ENCODE measurements at regions of chr11 and their contacts with region 1.

Region 1: GRCh38 chr11:69048718-69049489 is at the start of gene TPCN2:
- DNase-seq: peak; percentile 86 to 91
- H3K4me3 ChIP-seq: peak within 1 kb of the TSS; percentile 82
- H3K27ac ChIP-seq: no peak within 1 kb of the TSS
- H3K4me1 ChIP-seq: peaks cover 12% of the 10 kb centered on the region
- H3K27me3 ChIP-seq: no peaks in the 10 kb centered on the region
- CTCF ChIP-seq: no peak
- total RNA-seq, gene TPCN2: 24.8 and 26.4 TPM in 2 replicates

Region 2: GRCh38 chr11:68447015-68447801 is 601.7 kb before region 1 on chr11:
- CTCF ChIA-PET with region 1: interaction called, 10 read pairs
- POLR2A ChIA-PET with region 1: no interaction called
- intact Hi-C with region 1: no loop called
- DNase-seq: peak; percentile 54 to 77
- H3K4me3 ChIP-seq: no peak overlapping the region
- H3K27ac ChIP-seq: no peak overlapping the region
- H3K4me1 ChIP-seq: no peaks in the 10 kb centered on the region
- H3K27me3 ChIP-seq: no peaks in the 10 kb centered on the region
- CTCF ChIP-seq: peak; percentile 93

Region 3: GRCh38 chr11:68584097-68584496 is 464.8 kb before region 1 on chr11:
- CTCF ChIA-PET with region 1: no interaction called
- POLR2A ChIA-PET with region 1: no interaction called
- intact Hi-C with region 1: no loop called
- DNase-seq: peak in 1 of 2 experiments; percentile 22
- H3K4me3 ChIP-seq: no peak overlapping the region
- H3K27ac ChIP-seq: no peak overlapping the region
- H3K4me1 ChIP-seq: no peaks in the 10 kb centered on the region
- H3K27me3 ChIP-seq: no peaks in the 10 kb centered on the region
- CTCF ChIP-seq: peak; percentile 78

Region 4: GRCh38 chr11:68610452-68611116 is 438.3 kb before region 1 on chr11:
- CTCF ChIA-PET with region 1: interaction called, 3 read pairs
- POLR2A ChIA-PET with region 1: interaction called, 31 read pairs
- intact Hi-C with region 1: no loop called
- DNase-seq: no peak
- H3K4me3 ChIP-seq: no peak overlapping the region
- H3K27ac ChIP-seq: no peak overlapping the region
- H3K4me1 ChIP-seq: no peaks in the 10 kb centered on the region
- H3K27me3 ChIP-seq: no peaks in the 10 kb centered on the region
- CTCF ChIP-seq: peak; percentile 45; the same call in 1 of the 2 replicates

Region 5: GRCh38 chr11:68903288-68904247 is 145.3 kb before region 1 on chr11 and contains the starts of genes IGHMBP2 and MRPL21:
- CTCF ChIA-PET with region 1: interaction called, 3 read pairs
- POLR2A ChIA-PET with region 1: no interaction called
- intact Hi-C with region 1: loop called (anchors 1 kb)
- DNase-seq: peak; percentile 70 to 86
- H3K4me3 ChIP-seq: peak within 1 kb of the TSS; percentile 99
- H3K27ac ChIP-seq: peak within 1 kb of the TSS; percentile 36
- H3K4me1 ChIP-seq: peaks cover 24% of the 10 kb centered on the region
- H3K27me3 ChIP-seq: no peaks in the 10 kb centered on the region
- CTCF ChIP-seq: no peak
- total RNA-seq, gene IGHMBP2: 27.0 and 27.6 TPM in 2 replicates
- total RNA-seq, gene MRPL21: 81.9 and 88.0 TPM in 2 replicates

Region 6: GRCh38 chr11:68950268-68950667 is 98.6 kb before region 1 on chr11:
- CTCF ChIA-PET with region 1: interaction called, 3 read pairs
- POLR2A ChIA-PET with region 1: interaction called, 9 read pairs
- intact Hi-C with region 1: loop called (anchors 5 kb)
- DNase-seq: peak; percentile 21 to 49
- H3K4me3 ChIP-seq: no peak overlapping the region
- H3K27ac ChIP-seq: no peak overlapping the region
- H3K4me1 ChIP-seq: no peaks in the 10 kb centered on the region
- H3K27me3 ChIP-seq: no peaks in the 10 kb centered on the region
- CTCF ChIP-seq: peak; percentile 73

Measured in PC-9 (cell line).